Activated CD8-positive, alpha-beta T cell treated with anti-CD3 and anti-CD28 coated beads for 36 hours (primary cell): ENCODE measurements at regions of chrX and their contacts with region 1.

Region 1: GRCh38 chrX:154762523-154763289 is at the start of gene DKC1:
- DNase-seq: peak; percentile 95
- ATAC-seq: peak; percentile 90
- H3K4me3 Mint-ChIP-seq: peak within 1 kb of the TSS; percentile 87
- H3K27ac Mint-ChIP-seq: peak within 1 kb of the TSS; percentile 96
- H3K4me1 Mint-ChIP-seq: peaks cover 40% of the 10 kb centered on the region
- H3K27me3 Mint-ChIP-seq: no peaks in the 10 kb centered on the region
- CTCF ChIP-seq: no peak
- total RNA-seq, gene DKC1: 132 to 138 TPM

Region 2: DNA sequence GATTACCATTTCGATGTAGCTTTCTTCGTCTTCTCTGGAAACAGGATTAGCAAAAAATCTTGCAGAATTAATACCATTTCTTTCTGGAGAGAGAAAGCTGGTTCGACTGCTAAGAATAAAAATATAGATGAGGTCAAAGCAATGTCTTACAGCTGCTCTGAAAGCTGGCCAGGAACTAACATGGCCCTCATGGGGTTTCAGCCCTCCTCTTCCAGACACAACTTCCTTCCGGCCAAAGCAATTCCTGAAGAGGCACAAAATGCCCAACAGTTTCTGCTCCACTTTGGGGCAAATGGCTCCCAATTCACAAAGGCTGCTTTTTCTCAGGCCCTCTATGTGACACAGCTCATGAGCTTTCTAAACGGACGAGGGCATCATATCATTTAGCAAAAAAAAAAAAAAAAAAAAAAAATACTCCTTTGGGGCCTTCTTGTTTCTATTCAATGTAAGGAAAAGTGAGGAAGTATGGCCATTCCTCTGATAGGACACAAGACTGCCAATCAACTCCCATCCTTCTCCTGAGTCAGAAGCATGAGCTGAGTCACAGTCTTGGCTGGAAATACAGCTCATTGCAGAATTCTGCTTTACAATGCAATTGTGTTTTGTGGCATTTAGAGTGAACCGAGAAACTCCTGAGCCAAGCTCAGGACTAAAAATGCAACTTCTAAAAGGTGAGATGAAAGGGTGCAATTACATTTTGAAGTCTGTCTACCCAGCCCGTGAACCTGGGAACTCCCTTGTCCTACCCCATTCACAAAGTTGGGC is 66.6 kb before region 1 on chrX:
- CTCF ChIA-PET with region 1: no interaction called
- POLR2A ChIA-PET with region 1: no interaction called
- intact Hi-C with region 1: no loop called
- DNase-seq: no peak
- ATAC-seq: no peak
- H3K4me3 Mint-ChIP-seq: no peak overlapping the region
- H3K27ac Mint-ChIP-seq: no peak overlapping the region
- H3K4me1 Mint-ChIP-seq: peaks cover 8% of the 10 kb centered on the region
- H3K27me3 Mint-ChIP-seq: no peaks in the 10 kb centered on the region
- CTCF ChIP-seq: no peak

Region 3: GRCh38 chrX:154804957-154805695 is 42.4 kb after region 1 on chrX and contains the start of gene MPP1:
- CTCF ChIA-PET with region 1: no interaction called
- POLR2A ChIA-PET with region 1: interaction called, 5 read pairs
- intact Hi-C with region 1: loop called (anchors 5 kb)
- DNase-seq: peak; percentile 73
- ATAC-seq: peak; percentile 89
- H3K4me3 Mint-ChIP-seq: peak within 1 kb of the TSS; percentile 71
- H3K27ac Mint-ChIP-seq: peak within 1 kb of the TSS; percentile 59
- H3K4me1 Mint-ChIP-seq: peaks cover 50% of the 10 kb centered on the region
- H3K27me3 Mint-ChIP-seq: no peaks in the 10 kb centered on the region
- CTCF ChIP-seq: no peak
- total RNA-seq, gene MPP1: 22.5 to 24.9 TPM

Region 4: GRCh38 chrX:155009994-155010472 is 247.3 kb after region 1 on chrX:
- CTCF ChIA-PET with region 1: no interaction called
- POLR2A ChIA-PET with region 1: no interaction called
- intact Hi-C with region 1: no loop called
- DNase-seq: no peak
- ATAC-seq: no peak
- H3K4me3 Mint-ChIP-seq: no peak overlapping the region
- H3K27ac Mint-ChIP-seq: no peak overlapping the region
- H3K4me1 Mint-ChIP-seq: no peaks in the 10 kb centered on the region
- H3K27me3 Mint-ChIP-seq: no peaks in the 10 kb centered on the region
- CTCF ChIP-seq: no peak